Colonic mucosa (tissue), 4 donors: ENCODE measurements at regions of chr1 and their contacts with region 1.

Region 1: DNA sequence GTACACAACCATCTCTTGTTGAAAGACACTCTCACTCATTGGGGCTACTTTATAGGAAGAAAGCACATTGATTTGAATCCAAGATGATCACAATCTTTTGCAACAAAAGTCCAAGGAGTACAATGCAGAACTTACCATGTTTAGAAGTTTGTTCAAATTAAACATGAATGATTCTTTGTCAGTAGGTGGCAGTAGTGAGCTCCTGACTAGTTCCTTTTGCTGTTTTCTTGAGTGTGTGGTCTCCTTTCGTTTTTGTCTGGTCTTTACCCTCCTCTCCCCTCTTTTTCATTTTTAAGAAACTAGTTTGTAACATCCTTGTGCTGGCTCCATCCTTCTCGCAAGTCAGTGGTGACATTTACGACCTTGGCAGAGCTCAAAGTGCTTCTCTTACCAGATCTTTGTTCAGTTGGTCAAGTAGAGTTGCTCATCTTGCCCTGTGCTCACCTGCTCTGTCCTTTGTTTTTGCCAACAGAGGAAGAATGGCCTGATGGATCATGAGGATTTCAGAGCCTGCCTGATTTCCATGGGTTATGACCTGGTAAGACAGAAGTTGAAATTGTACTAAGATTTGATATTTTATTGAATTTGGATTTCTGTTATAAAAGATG is 35.7 kb upstream of the MTR start:
- DNase-seq: no peak
- H3K4me3 ChIP-seq: no peak overlapping the region
- H3K27ac ChIP-seq: no peak overlapping the region
- H3K4me1 ChIP-seq: no peaks in the 10 kb centered on the region
- H3K27me3 ChIP-seq: no peaks in the 10 kb centered on the region
- CTCF ChIP-seq: peak; percentile 57

Region 2: GRCh38 chr1:236603991-236604904 is 155.1 kb before region 1 on chr1 and contains the start of gene HEATR1:
- intact Hi-C with region 1: loop called (anchors 10 kb)
- DNase-seq: peak; percentile 94
- H3K4me3 ChIP-seq: peak within 1 kb of the TSS; percentile 71
- H3K27ac ChIP-seq: peak within 1 kb of the TSS; percentile 58
- H3K4me1 ChIP-seq: peaks cover 5% of the 10 kb centered on the region
- H3K27me3 ChIP-seq: no peaks in the 10 kb centered on the region
- CTCF ChIP-seq: no peak
- total RNA-seq, gene HEATR1: 15.3 to 26.6 TPM

Region 3: GRCh38 chr1:236868625-236869467 is 109.5 kb after region 1 on chr1:
- intact Hi-C with region 1: loop called (anchors 2 kb)
- DNase-seq: peak; percentile 30
- H3K4me3 ChIP-seq: no peak overlapping the region
- H3K27ac ChIP-seq: no peak overlapping the region
- H3K4me1 ChIP-seq: no peaks in the 10 kb centered on the region
- H3K27me3 ChIP-seq: no peaks in the 10 kb centered on the region
- CTCF ChIP-seq: peak; percentile 94